MCF 10A (cell line): ENCODE measurements at regions of chr1 and their contacts with region 1.

Region 1: GRCh38 chr1:184386312-184387068 is at the start of gene C1orf21:
- DNase-seq: peak; percentile 93
- H3K4me3 Mint-ChIP-seq: peak within 1 kb of the TSS; percentile 90
- H3K27ac Mint-ChIP-seq: peak within 1 kb of the TSS; percentile 79
- H3K4me1 Mint-ChIP-seq: peaks cover 27% of the 10 kb centered on the region
- H3K27me3 Mint-ChIP-seq: no peaks in the 10 kb centered on the region
- CTCF ChIP-seq: no peak
- total RNA-seq, gene C1orf21: 23.2 and 25.3 TPM in 2 replicates

Region 2: GRCh38 chr1:184051485-184052193 is 334.9 kb before region 1 on chr1 and contains the start of gene TSEN15:
- CTCF ChIA-PET with region 1: no interaction called
- POLR2A ChIA-PET with region 1: interaction called, 15 read pairs
- intact Hi-C with region 1: no loop called
- DNase-seq: peak; percentile 94
- H3K4me3 Mint-ChIP-seq: peak within 1 kb of the TSS; percentile 93
- H3K27ac Mint-ChIP-seq: peak within 1 kb of the TSS; percentile 98
- H3K4me1 Mint-ChIP-seq: peaks cover 26% of the 10 kb centered on the region
- H3K27me3 Mint-ChIP-seq: peaks cover 22% of the 10 kb centered on the region
- CTCF ChIP-seq: no peak
- total RNA-seq, gene TSEN15: 88.7 and 97.5 TPM in 2 replicates

Region 3: DNA sequence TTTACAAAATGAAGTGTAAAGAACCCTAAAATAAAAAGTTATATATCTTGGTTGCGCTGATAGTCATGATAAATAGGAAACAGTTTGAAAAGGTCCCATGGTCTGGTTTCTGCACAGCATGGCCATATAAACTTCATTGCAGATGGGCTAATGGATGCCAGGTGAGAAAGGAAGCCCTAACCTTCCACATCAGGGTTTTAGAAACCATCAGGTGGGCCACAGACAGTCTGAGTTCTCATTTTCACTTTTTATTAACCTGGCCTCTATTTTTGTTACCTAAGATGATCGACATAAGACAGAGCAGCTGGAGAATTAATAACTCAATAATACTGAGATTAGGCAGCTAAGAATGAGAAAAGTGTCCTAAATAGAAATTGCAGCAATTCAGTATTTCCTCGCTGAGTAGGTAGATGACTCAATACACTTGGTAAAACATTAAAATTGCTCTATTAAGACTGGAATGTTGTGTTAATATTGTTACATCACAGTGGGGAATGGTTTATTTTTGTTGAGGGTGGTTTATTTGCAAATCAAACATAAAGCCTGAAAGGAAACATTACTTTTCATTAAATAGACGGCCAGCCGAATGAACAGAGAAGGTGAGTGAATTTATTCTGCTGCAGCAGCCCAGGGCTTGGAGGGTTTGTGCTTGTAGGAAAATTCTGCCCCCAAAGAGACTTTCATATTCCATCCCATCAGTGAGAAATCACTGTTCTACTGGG is 21.5 kb after region 1 on chr1:
- CTCF ChIA-PET with region 1: interaction called, 6 read pairs
- POLR2A ChIA-PET with region 1: interaction called, 44 read pairs
- intact Hi-C with region 1: no loop called
- DNase-seq: peak; percentile 34
- H3K4me3 Mint-ChIP-seq: no peak overlapping the region
- H3K27ac Mint-ChIP-seq: peak overlapping the region; percentile 44
- H3K4me1 Mint-ChIP-seq: peaks cover 39% of the 10 kb centered on the region
- H3K27me3 Mint-ChIP-seq: no peaks in the 10 kb centered on the region
- CTCF ChIP-seq: no peak

Region 4: DNA sequence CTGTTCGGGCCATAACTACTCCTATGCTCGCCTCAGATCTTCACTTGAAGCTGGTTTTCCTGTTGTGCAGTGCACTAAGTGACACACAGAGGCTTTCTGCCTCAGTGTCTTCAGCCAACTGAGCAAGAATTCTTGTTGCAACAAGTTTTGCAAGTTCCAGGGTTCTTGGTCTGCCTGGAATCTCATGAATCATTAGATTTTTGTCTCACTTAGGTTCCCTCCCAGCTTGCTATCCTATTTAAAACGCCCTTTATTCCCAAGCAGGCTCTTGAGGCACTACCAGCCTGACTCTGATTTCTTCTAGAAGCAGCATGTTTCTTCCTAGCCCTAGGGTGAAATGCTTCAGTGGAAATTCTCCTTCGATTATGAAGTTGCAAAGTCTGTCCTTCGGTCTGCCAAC is 159.1 kb after region 1 on chr1:
- CTCF ChIA-PET with region 1: interaction called, 4 read pairs
- POLR2A ChIA-PET with region 1: interaction called, 16 read pairs
- intact Hi-C with region 1: no loop called
- DNase-seq: peak; percentile 83
- H3K4me3 Mint-ChIP-seq: peak overlapping the region; percentile 39
- H3K27ac Mint-ChIP-seq: peak overlapping the region; percentile 57
- H3K4me1 Mint-ChIP-seq: peaks cover 26% of the 10 kb centered on the region
- H3K27me3 Mint-ChIP-seq: no peaks in the 10 kb centered on the region
- CTCF ChIP-seq: no peak

Region 5: DNA sequence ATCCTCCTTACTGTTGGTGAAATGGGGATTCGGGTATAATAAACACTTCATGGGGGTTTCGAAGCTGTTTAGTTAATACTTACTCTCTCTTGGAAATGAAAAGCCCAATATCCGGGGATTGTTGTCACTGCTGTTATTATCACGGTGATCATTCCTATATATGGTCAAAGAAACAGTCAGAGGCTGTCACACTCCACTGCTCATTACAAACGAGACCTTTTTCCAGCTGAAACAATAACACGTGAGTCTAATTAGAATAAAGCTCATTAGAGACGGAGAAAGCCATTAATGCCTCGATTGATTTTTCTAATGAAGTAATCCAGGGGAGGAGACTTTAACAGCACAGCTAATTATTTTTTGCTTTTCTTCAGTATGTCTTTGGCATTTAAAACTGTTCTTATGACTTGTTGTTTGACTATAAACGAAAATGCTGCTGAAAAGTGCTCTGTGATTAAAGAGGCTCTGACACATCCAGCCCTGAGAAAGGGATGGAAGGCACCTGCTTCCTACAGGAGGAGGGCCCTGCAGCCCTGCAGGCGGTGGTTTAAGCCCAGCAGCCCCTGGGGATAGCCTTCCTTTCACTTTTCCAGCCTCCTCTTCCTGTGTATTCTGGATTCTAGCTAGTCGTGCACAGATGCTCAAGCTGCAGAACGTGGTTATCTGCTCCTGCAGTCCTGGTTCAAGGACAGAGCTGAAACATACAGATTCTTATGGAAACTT is 224.5 kb after region 1 on chr1:
- CTCF ChIA-PET with region 1: interaction called, 3 read pairs
- POLR2A ChIA-PET with region 1: interaction called, 27 read pairs
- intact Hi-C with region 1: loop called (anchors 5 kb)
- DNase-seq: no peak
- H3K4me3 Mint-ChIP-seq: no peak overlapping the region
- H3K27ac Mint-ChIP-seq: peak overlapping the region; percentile 95
- H3K4me1 Mint-ChIP-seq: peaks cover 23% of the 10 kb centered on the region
- H3K27me3 Mint-ChIP-seq: no peaks in the 10 kb centered on the region
- CTCF ChIP-seq: no peak

Region 6: DNA sequence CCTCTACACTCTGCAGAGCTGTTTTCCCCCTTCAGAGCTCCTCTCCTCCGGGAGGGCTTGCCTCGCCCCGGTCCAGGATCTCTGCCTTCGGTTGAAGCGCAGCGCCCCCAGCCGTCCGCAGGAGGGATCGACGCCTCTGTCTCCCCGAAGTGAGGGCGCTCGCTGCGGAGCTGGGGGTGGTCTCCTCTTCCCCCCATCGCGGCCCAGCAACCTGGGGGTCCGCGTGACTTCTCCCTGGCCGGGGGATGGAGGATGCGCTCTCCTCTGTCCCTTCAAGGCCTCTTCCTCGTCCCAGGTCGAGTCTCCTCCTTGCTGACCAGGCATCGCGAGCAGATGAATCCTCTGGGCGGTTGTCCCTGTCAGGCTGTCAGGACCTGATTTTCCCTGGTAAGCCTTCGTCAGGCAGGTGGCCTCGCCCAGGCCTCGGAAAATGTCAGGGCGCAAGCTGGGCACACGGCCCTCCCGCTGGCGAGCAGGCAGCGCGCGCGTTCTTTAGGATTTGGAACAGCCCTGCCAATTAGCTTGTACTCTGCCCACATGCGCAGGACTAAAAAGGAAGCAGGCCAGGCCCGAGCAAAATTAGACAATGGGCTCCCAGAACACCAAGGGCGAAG is 277.7 kb after region 1 on chr1:
- CTCF ChIA-PET with region 1: interaction called, 12 read pairs
- POLR2A ChIA-PET with region 1: interaction called, 18 read pairs
- intact Hi-C with region 1: loop called (anchors 1 kb)
- DNase-seq: peak; percentile 79
- H3K4me3 Mint-ChIP-seq: peak overlapping the region; percentile 74
- H3K27ac Mint-ChIP-seq: peak overlapping the region; percentile 67
- H3K4me1 Mint-ChIP-seq: peaks cover 29% of the 10 kb centered on the region
- H3K27me3 Mint-ChIP-seq: no peaks in the 10 kb centered on the region
- CTCF ChIP-seq: peak; percentile 99